ENCODE measurements at regions of chr6 and their contacts with region 1.

Region 1: GRCh38 chr6:170529839-170530469 is 23.2 kb downstream of the PSMB1 start:
- DNase-seq: peak; percentile 80 to 83
- H3K4me3 ChIP-seq: no peak overlapping the region
- H3K27ac ChIP-seq: no peak overlapping the region
- H3K4me1 ChIP-seq: no peaks in the 10 kb centered on the region
- H3K27me3 ChIP-seq: no peaks in the 10 kb centered on the region
- CTCF ChIP-seq: peak; percentile 68 to 91 (median 82)
- POLR2A ChIP-seq: no peak

Region 2: DNA sequence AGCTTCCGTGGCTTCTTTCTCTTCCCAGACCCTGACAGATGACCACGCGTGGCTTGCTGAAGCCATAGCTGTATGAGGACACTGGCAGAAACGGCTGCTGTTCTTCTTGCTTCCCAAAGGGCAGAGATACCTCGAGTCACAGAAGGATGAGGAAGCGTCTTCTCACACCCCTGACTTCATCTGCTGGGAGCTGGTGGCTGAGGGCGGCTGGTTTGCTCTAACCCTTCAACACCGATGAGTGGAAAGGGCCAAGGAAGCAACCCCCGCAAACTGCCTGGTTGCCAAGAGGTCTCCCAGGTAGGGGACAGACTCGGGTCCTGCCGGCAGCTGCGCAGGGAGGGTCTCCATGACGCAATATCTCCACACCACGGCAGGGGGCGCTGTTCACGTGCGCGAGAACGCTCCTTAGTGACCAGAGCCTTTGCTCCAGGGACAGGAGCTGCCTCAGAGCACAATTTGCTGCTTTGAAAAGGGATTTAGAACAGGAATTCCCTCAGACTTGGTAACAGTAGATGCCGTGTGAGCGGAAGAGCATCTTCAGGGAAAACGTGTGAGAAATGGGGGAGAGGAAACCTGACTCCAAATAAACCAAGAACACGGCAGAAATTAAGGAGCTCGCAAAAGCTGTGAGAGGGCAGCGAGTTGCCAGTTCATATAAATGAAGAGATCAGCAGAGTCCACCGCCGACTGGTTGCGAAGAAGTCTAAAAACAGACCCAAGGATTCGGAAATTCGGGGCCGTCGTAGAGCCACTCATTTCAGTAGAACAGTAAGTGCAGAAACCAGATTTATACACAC is 698.3 kb before region 1 on chr6:
- intact Hi-C with region 1: loop called (anchors 5 kb)
- DNase-seq: peak; percentile 64 to 69
- H3K4me3 ChIP-seq: no peak overlapping the region
- H3K27ac ChIP-seq: no peak overlapping the region
- H3K4me1 ChIP-seq: peaks cover 0 to 3% of the 10 kb centered on the region in 2 donors
- H3K27me3 ChIP-seq: no peaks in the 10 kb centered on the region
- CTCF ChIP-seq: peak; percentile 80 to 92 (median 90)
- POLR2A ChIP-seq: no peak

Region 3: DNA sequence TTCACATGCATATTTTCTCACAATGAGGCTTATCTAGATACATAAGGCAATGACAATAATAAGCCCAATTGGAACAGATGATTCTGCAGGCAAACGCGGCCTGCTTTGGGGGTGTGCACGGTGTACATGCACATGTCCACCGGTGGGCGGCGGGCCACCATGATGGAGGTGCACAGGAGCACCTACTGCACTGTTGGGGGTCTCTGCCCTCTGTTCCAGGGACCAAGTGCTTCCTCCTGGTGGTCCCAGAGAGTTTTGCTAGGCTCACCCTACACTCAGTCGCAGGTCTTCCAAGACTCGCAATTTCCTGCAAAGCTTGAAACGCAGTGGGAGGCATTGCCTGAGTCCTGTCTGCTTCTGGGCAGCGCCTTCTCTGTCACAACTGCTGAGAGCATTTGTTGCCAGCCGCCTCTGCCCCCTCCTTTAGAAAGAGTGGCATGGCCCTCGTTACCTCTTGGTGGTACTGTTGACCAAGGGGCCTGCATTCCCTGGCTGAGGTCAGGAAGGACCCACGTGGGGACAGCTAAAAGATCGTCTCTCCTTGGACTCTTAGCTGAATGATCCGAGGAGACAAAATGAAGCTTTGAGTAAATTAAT is 643.2 kb before region 1 on chr6:
- intact Hi-C with region 1: no loop called
- DNase-seq: no peak
- H3K4me3 ChIP-seq: no peak overlapping the region
- H3K27ac ChIP-seq: no peak overlapping the region
- H3K4me1 ChIP-seq: no peaks in the 10 kb centered on the region
- H3K27me3 ChIP-seq: no peaks in the 10 kb centered on the region
- CTCF ChIP-seq: no peak
- POLR2A ChIP-seq: no peak

Region 4: DNA sequence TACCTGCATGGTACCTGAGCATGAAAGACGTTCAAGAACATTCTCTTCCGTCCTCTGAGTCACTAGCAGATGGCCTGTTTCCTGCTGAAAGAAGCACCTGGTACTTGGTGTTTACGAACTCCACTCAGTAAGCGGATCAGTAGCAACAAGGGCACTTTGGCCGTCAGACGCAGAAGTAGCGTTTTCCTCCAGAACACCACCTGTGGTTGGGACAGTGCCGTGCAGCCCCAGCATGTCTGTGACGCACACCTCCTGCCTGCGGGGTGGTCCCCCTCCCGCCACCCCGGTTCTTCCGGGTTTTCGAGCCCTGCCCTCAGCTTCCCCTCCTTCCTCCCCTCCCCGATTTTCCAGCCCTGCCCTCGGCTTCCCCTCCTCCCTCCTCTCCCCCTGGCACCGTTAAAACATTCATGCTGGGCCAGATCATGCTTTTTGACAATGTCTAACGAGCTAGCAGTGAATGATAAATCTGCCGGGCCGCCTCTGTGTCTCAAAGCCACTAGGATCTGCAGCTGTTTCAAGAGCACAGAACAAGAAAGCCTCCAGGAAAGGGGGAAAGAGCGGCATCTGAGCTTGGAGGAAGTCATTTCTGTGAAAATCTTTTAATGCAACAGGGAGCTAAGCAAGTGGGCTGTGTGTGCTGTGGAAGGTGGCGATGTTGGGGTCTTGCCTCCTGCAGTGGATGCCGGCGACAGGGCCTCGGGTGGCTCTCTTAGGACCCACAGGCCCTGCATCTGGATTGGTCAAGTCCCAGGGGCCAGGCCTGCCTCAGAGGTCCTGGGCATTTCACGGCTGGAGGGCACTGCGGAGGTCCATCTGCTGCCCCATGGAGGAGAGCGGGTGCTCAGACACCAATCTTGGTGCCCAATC is 570.6 kb before region 1 on chr6:
- intact Hi-C with region 1: loop called (anchors 10 kb)
- DNase-seq: peak; percentile 22 to 25
- H3K4me3 ChIP-seq: no peak overlapping the region
- H3K27ac ChIP-seq: no peak overlapping the region
- H3K4me1 ChIP-seq: peaks cover 0 to 22% of the 10 kb centered on the region in 2 donors
- H3K27me3 ChIP-seq: no peaks in the 10 kb centered on the region
- CTCF ChIP-seq: peak in 1 of 6 experiments; percentile 9
- POLR2A ChIP-seq: no peak

Region 5: DNA sequence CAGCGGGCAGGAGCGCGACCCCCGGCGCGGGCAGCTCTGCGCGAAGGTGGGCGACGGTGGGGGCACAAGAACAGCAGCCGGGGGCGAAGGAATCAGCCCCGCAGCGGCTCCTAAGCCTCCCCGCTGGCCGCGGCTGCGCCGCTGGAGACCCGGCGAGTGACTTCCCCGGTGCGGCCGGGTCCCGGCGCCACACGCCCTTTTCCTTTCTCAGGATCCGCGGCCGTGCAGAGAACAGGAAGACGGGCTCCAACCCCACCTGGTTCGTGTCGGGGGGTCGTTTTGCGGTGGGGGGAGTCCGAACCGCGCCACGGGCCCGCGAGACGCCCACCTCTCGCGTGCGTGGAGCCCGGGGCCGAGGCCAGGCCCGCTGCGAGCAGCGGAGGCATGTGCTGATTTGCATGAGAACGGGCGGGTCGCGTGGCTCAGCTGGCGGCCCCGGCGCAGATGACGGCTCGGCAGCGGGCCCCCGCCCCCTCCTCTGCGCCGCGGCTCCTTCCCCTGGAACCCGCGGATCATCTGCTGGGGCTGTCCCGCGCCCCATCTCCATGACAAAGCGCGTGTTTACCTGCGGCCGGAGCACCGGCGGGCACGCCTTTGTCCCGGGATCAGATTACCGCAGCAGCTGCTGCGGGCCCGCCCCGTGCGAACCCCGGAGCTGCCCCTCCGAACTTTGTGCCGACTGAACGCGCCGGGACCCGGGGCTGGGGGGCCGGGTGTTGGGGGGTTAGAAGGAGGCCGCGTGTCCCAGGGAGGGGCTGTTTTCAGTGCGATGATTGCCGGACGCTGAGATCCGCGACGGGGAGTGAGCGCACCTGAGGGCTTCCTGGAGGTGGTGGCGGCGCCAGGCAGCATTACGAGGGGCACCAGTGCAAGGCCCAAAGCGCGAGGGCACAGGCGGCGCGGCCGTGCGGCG is 234.2 kb before region 1 on chr6:
- intact Hi-C with region 1: no loop called
- DNase-seq: peak in 1 of 2 donors; percentile 20
- H3K4me3 ChIP-seq: peak overlapping the region; percentile 15 to 48 (median 16)
- H3K27ac ChIP-seq: no peak overlapping the region
- H3K4me1 ChIP-seq: peaks cover 35 to 43% of the 10 kb centered on the region in 2 donors
- H3K27me3 ChIP-seq: peaks cover 24% of the 10 kb centered on the region
- CTCF ChIP-seq: no peak
- POLR2A ChIP-seq: no peak

Measured in thyroid gland (tissue), 4 donors.